H1 (cell line): ENCODE measurements at regions of chr20 and their contacts with region 1.

Region 1: DNA sequence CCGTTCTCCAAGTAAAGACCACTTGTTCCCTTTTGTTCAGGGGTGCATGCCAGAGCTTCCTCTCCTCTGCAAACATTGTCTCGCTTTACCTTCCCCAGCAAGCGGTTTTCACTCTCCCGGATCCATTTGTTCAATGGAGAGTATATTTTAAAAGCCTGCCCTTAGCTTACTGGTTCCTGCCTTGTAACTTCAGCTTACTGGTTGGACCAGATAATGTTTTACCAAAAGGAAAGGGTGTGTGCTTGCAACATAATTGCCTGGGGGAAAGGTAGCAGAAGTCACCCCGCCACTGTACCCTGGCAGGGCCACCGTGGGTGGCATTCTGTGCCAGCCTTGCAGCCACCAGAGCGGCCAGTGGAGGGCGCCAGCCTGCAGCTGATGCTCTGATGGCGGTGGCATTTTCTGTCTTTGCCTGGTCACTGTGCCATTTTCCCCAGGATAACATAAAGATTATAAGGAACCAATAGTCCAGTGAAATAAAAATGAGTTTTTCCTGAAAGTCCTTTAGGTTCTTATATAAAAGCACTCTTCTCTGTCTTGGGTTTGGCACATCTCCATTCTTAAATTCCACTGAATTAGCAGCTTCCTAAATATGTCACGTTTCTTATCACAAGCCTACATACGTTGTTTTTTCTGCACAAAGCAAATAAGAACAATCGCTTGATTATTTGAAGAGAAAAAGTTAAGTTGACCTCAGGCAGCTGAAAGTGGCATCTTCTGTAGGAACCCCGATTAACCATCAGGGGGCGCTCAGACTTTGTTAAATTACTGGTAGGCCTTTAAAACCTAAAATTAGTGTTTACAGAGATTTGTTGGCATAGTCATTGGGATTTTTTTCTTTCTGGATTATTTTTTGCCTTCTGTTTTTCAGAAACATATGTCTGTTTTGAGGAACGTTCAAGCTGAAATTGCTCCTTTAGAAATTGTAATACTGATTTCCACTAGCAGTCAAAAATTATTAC is 67.4 kb upstream of the XRN2 start:
- DNase-seq: peak in 1 of 2 experiments; percentile 88
- H3K4me3 ChIP-seq: peak overlapping the region in 1 of 4 experiments; percentile 43; a peak in 2 of 8 replicates
- H3K27ac ChIP-seq: no peak overlapping the region
- H3K4me1 ChIP-seq: peaks cover 0 to 20% (median 10%) of the 10 kb centered on the region in 4 experiments; a peak in 3 of 7 replicates
- H3K27me3 ChIP-seq: no peaks in the 10 kb centered on the region
- CTCF ChIP-seq: peak; percentile 92 to 97 (median 94)
- EP300 ChIP-seq: no peak
- POLR2A ChIP-seq: no peak
- RAD21 ChIP-seq: peak; percentile 82 to 85

Region 2: GRCh38 chr20:20989081-20989480 is 246.7 kb before region 1 on chr20:
- CTCF ChIA-PET with region 1: no interaction called
- POLR2A ChIA-PET with region 1: no interaction called
- DNase-seq: no peak
- H3K4me3 ChIP-seq: no peak overlapping the region
- H3K27ac ChIP-seq: no peak overlapping the region
- H3K4me1 ChIP-seq: no peaks in the 10 kb centered on the region
- H3K27me3 ChIP-seq: no peaks in the 10 kb centered on the region
- CTCF ChIP-seq: no peak
- EP300 ChIP-seq: no peak
- POLR2A ChIP-seq: no peak
- RAD21 ChIP-seq: no peak

Region 3: DNA sequence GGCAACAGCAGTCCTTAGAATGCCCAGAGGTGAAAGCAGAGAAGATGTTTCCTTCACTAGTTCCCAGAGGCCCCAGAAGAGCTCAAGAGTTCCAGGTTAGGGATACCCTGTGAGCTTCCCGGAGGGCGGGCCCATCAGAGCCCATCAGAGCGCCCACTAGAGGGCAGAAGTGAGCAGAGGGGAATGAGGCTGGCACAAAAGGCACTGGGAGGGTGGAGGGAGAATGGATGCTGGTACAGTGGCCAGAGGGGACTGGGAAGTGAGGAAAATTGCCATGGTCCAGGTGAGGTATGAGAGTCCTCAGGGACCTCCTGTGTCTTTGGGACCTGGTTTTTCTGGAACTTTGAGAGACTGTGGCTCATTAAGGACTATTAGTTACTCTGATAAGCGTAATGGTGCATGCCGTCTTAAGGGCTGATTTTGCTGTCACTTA is 186.9 kb before region 1 on chr20:
- CTCF ChIA-PET with region 1: interaction called, 23 read pairs
- POLR2A ChIA-PET with region 1: no interaction called
- DNase-seq: peak in 1 of 2 experiments; percentile 96
- H3K4me3 ChIP-seq: no peak overlapping the region
- H3K27ac ChIP-seq: no peak overlapping the region
- H3K4me1 ChIP-seq: peaks cover 5 to 13% (median 10%) of the 10 kb centered on the region in 4 experiments; a peak in 6 of 7 replicates
- H3K27me3 ChIP-seq: no peaks in the 10 kb centered on the region
- CTCF ChIP-seq: peak; percentile 81 to 91 (median 90)
- EP300 ChIP-seq: no peak
- POLR2A ChIP-seq: no peak
- RAD21 ChIP-seq: peak; percentile 83 to 86

Region 4: DNA sequence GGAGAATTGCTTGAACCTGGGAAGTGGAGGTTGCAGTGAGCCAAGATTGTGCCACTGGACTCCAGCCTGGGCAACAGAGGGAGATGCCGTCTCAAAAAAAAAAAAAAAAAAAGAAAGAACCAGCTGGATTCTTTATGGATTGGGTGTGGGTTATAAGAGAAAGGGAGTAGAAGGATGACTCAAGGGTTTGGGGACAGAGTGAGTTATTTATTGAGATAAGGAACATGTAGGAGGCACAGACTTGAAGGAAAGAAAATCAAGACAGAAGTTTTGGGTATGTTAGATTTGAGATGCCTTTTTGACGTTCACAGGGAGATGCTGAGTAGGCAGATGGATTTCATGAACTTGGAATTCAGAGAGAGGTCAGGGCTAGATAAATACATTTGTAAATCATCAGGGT is 62.3 kb before region 1 on chr20:
- CTCF ChIA-PET with region 1: interaction called, 10 read pairs
- POLR2A ChIA-PET with region 1: no interaction called
- DNase-seq: no peak
- H3K4me3 ChIP-seq: no peak overlapping the region
- H3K27ac ChIP-seq: no peak overlapping the region
- H3K4me1 ChIP-seq: peaks cover 0 to 7% (median 3%) of the 10 kb centered on the region in 4 experiments; a peak in 2 of 7 replicates
- H3K27me3 ChIP-seq: no peaks in the 10 kb centered on the region
- CTCF ChIP-seq: no peak
- EP300 ChIP-seq: no peak
- POLR2A ChIP-seq: no peak
- RAD21 ChIP-seq: no peak

Region 5: DNA sequence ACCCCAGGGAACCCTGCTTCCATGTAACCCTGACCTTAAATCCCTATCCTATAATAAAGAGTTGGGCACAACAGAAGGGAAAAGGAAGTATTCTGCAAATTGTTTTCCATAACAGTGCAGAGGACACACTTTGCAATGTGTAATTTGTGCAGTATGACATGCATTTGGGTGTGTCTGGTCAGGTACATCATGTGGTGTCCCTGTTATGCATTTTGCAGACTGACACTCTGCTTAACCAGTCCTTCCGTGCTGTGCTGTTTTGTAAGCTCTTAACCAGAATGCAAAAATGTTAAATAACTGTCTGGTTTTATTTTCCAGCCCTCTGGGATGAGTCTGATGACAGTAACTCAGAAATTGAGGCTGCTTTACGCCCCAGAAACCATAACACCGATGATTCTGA is 10.4 kb after region 1 on chr20:
- CTCF ChIA-PET with region 1: interaction called, 21 read pairs
- POLR2A ChIA-PET with region 1: no interaction called
- DNase-seq: no peak
- H3K4me3 ChIP-seq: no peak overlapping the region
- H3K27ac ChIP-seq: no peak overlapping the region
- H3K4me1 ChIP-seq: no peaks in the 10 kb centered on the region
- H3K27me3 ChIP-seq: no peaks in the 10 kb centered on the region
- CTCF ChIP-seq: no peak
- EP300 ChIP-seq: no peak
- POLR2A ChIP-seq: no peak
- RAD21 ChIP-seq: no peak

Region 6: GRCh38 chr20:21291026-21291425 is 55.3 kb after region 1 on chr20:
- CTCF ChIA-PET with region 1: interaction called, 12 read pairs
- POLR2A ChIA-PET with region 1: no interaction called
- DNase-seq: no peak
- H3K4me3 ChIP-seq: no peak overlapping the region
- H3K27ac ChIP-seq: no peak overlapping the region
- H3K4me1 ChIP-seq: no peaks in the 10 kb centered on the region
- H3K27me3 ChIP-seq: no peaks in the 10 kb centered on the region
- CTCF ChIP-seq: no peak
- EP300 ChIP-seq: no peak
- POLR2A ChIP-seq: no peak
- RAD21 ChIP-seq: no peak

Region 7: GRCh38 chr20:21342656-21343345 is 107.0 kb after region 1 on chr20:
- CTCF ChIA-PET with region 1: interaction called, 14 read pairs
- POLR2A ChIA-PET with region 1: no interaction called
- DNase-seq: no peak
- H3K4me3 ChIP-seq: no peak overlapping the region
- H3K27ac ChIP-seq: no peak overlapping the region
- H3K4me1 ChIP-seq: peaks cover 0 to 4% (median 0%) of the 10 kb centered on the region in 4 experiments; a peak in 3 of 7 replicates
- H3K27me3 ChIP-seq: no peaks in the 10 kb centered on the region
- CTCF ChIP-seq: no peak
- EP300 ChIP-seq: no peak
- POLR2A ChIP-seq: no peak
- RAD21 ChIP-seq: no peak

Region 8: DNA sequence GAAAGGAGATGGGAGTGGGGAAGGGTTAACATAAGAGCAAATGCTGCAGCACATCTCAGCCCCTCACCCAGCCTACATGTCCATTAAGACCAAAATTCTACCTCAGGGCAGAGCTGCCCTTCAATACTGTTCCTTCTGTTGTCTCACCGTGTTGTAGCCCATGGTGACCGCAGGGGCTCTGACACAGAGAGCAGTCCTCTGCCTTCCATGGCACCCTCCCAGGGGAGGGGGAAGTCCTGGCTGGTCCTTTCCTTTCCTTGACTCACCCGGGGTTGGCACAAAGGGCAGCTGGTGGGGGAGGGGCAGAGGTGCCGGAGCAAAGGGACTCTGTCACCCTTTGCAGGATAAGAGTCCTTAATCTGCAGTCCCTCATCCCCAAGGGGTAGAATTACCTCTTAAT is 262.9 kb after region 1 on chr20:
- CTCF ChIA-PET with region 1: interaction called, 90 read pairs
- POLR2A ChIA-PET with region 1: no interaction called
- DNase-seq: no peak
- H3K4me3 ChIP-seq: no peak overlapping the region
- H3K27ac ChIP-seq: no peak overlapping the region
- H3K4me1 ChIP-seq: peaks cover 4 to 11% (median 7%) of the 10 kb centered on the region in 4 experiments
- H3K27me3 ChIP-seq: peaks cover 0 to 3% (median under 1%) of the 10 kb centered on the region in 4 experiments; a peak in 1 of 7 replicates
- CTCF ChIP-seq: no peak
- EP300 ChIP-seq: no peak
- POLR2A ChIP-seq: no peak
- RAD21 ChIP-seq: no peak